PC-3 (cell line): ENCODE measurements at regions of chr1 and their contacts with region 1.

Region 1: DNA sequence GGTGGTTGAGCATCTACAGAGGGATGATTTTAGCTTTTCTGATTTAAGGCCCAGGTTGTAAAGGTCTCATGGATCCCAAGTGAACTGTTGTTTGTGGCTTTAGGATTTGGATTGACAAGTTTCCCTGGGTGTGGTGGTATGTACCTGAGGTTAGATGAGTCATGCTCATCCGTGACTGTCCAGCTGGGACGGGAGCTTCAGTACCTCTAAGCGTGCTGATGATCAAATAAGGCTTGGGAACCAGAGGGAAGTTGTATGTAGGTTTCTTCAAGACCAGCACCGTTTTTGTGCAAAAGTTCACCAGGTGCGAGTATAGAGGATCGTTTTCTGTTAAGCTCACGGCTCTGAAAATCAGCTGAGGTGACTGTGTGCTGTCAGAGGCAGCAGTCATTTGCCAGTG is 19.8 kb downstream of the PLA2G2E start:
- DNase-seq: peak; percentile 97
- ATAC-seq: peak; percentile 97
- H3K4me3 ChIP-seq: peak overlapping the region; percentile 20; the same call in 1 of the 2 replicates
- H3K27ac ChIP-seq: peak overlapping the region; percentile 94
- H3K4me1 ChIP-seq: peaks cover 29% of the 10 kb centered on the region
- H3K27me3 ChIP-seq: no peaks in the 10 kb centered on the region
- CTCF ChIP-seq: no peak

Region 2: GRCh38 chr1:19866758-19867157 is 36.8 kb before region 1 on chr1:
- CTCF ChIA-PET with region 1: no interaction called
- POLR2A ChIA-PET with region 1: no interaction called
- intact Hi-C with region 1: no loop called
- DNase-seq: peak; percentile 80
- ATAC-seq: peak; percentile 75
- H3K4me3 ChIP-seq: no peak overlapping the region
- H3K27ac ChIP-seq: peak overlapping the region; percentile 61
- H3K4me1 ChIP-seq: peaks cover 62% of the 10 kb centered on the region
- H3K27me3 ChIP-seq: no peaks in the 10 kb centered on the region
- CTCF ChIP-seq: no peak

Region 3: GRCh38 chr1:19882111-19883071 is 21.2 kb before region 1 on chr1 and contains the start of gene OTUD3:
- CTCF ChIA-PET with region 1: no interaction called
- POLR2A ChIA-PET with region 1: interaction called, 4 read pairs
- intact Hi-C with region 1: loop called (anchors 1 kb)
- DNase-seq: peak; percentile 98
- ATAC-seq: peak; percentile 89
- H3K4me3 ChIP-seq: peak within 1 kb of the TSS; percentile 92
- H3K27ac ChIP-seq: peak within 1 kb of the TSS; percentile 78
- H3K4me1 ChIP-seq: peaks cover 26% of the 10 kb centered on the region
- H3K27me3 ChIP-seq: no peaks in the 10 kb centered on the region
- CTCF ChIP-seq: peak; percentile 86
- total RNA-seq, gene OTUD3: 9.7 and 9.9 TPM in 2 replicates

Region 4: GRCh38 chr1:19918057-19918456 is 14.5 kb after region 1 on chr1:
- CTCF ChIA-PET with region 1: interaction called, 15 read pairs
- POLR2A ChIA-PET with region 1: no interaction called
- intact Hi-C with region 1: no loop called
- DNase-seq: peak; percentile 89
- ATAC-seq: peak; percentile 74
- H3K4me3 ChIP-seq: no peak overlapping the region
- H3K27ac ChIP-seq: no peak overlapping the region
- H3K4me1 ChIP-seq: no peaks in the 10 kb centered on the region
- H3K27me3 ChIP-seq: no peaks in the 10 kb centered on the region
- CTCF ChIP-seq: peak; percentile 96